HepG2 (cell line): ENCODE measurements at regions of chr2 and their contacts with region 1.

Region 1: GRCh38 chr2:172588931-172589330 is 33.0 kb downstream of the PDK1 start:
- DNase-seq: no peak
- ATAC-seq: no peak
- H3K4me3 ChIP-seq: no peak overlapping the region
- H3K27ac ChIP-seq: no peak overlapping the region
- H3K4me1 ChIP-seq: no peaks in the 10 kb centered on the region
- H3K27me3 ChIP-seq: no peaks in the 10 kb centered on the region
- CTCF ChIP-seq: no peak
- EP300 ChIP-seq: no peak
- POLR2A ChIP-seq: no peak
- RAD21 ChIP-seq: no peak

Region 2: DNA sequence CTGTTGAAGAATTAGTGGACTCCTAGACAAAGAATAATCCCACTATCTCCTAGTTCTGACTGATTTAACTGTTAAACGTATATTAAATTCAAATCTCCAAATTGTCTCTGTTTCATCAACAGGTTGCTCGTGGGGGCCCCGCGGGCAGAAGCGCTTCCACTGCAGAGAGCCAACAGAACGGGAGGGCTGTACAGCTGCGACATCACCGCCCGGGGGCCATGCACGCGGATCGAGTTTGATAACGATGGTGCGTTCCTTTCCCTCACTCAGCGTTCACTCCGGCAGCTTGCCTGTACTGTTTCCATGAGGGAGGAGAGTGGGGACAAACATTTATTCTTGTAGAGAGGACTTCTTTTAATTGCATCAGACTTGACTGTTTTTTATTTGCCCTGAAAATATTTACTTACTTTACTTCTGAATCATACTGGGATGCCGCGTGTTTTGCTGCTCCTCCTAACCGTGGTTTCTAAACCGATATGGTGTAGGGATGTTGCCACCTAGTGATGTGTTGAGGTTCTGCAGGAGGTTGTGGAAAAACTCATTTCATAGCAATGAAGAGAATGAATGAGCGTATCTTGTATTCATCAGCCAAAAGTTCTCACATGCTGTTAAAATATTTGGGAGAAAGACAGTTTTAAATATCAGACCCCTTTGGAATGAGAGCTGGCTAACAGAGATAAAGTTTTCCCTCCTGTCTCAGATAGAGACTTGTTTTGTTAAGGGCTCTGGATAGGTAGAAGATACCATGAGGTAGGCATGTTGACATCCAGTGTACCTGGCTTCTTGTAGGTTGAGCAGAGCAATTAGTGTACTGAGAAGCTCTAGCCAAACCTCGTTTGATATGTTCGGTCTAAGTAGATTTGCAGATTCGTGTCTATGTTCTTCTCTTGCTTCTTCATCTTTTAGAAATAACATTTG is 123.3 kb before region 1 on chr2:
- CTCF ChIA-PET with region 1: no interaction called
- POLR2A ChIA-PET with region 1: no interaction called
- in situ Hi-C with region 1: no loop called
- intact Hi-C with region 1: no loop called
- DNase-seq: peak; percentile 95
- ATAC-seq: peak; percentile 93
- H3K4me3 ChIP-seq: peak overlapping the region in 1 of 3 experiments; percentile 36; a peak in 2 of 6 replicates
- H3K27ac ChIP-seq: peak overlapping the region; percentile 26
- H3K4me1 ChIP-seq: peaks cover 48% of the 10 kb centered on the region
- H3K27me3 ChIP-seq: no peaks in the 10 kb centered on the region
- CTCF ChIP-seq: peak; percentile 93
- EP300 ChIP-seq: peak in 1 of 2 experiments; percentile 74; a peak in 1 of 4 replicates
- POLR2A ChIP-seq: no peak
- RAD21 ChIP-seq: peak; percentile 93

Region 3: DNA sequence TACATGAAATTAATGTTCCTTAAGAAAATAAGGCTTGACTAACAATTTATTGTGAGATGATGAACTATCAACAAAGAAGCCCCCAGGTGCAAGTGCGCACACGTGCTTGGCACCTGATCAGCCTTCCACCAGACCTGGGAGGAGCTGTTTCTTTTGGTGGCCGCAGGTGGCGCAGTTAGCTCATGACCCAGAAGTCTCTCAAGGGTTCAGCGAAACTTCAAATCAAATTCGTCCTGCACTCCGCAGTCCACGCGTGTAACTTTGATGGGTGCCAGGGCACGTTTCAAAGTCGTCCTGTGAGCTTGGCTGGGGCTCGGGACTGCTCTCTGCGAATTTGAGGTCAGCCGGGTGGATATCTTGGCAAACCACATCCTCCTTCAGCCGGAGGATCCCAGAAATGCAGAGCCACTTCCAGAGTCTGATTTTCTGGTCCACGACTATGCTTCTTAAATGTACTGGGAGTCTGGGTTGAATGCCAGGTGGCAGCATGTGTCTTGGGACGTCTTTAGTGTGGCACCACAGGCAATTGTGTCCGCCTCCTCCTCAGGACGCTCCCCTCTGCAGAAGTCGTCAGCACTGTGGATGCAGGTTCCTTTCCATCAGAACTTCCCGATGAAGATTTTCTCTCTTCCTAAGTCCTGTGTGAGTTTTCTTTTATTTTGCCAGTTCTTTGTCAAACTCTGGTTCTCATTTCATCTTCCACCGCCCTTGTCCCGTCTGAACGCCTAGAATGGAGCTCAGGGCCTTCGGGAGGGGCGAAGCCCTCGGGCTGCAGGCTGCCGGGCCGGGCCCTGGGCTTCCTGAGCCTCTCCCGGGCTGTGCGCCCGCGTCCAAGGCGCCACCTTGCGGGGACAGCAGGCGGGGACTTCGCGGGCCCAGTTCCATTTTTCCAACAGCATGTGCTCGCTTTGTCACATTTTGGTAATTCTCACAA is 85.4 kb after region 1 on chr2:
- CTCF ChIA-PET with region 1: interaction called, 9 read pairs
- POLR2A ChIA-PET with region 1: no interaction called
- in situ Hi-C with region 1: no loop called
- intact Hi-C with region 1: loop called (anchors 2 kb)
- DNase-seq: no peak
- ATAC-seq: peak; percentile 98
- H3K4me3 ChIP-seq: no peak overlapping the region; a peak in 1 of 6 replicates
- H3K27ac ChIP-seq: no peak overlapping the region
- H3K4me1 ChIP-seq: peaks cover 10% of the 10 kb centered on the region
- H3K27me3 ChIP-seq: no peaks in the 10 kb centered on the region
- CTCF ChIP-seq: peak; percentile 74
- EP300 ChIP-seq: no peak
- POLR2A ChIP-seq: no peak
- RAD21 ChIP-seq: no peak

Region 4: GRCh38 chr2:172710584-172711024 is 121.7 kb after region 1 on chr2:
- CTCF ChIA-PET with region 1: interaction called, 10 read pairs
- POLR2A ChIA-PET with region 1: no interaction called
- in situ Hi-C with region 1: no loop called
- intact Hi-C with region 1: loop called (anchors 1 kb)
- DNase-seq: peak; percentile 25
- ATAC-seq: peak; percentile 60
- H3K4me3 ChIP-seq: no peak overlapping the region
- H3K27ac ChIP-seq: no peak overlapping the region
- H3K4me1 ChIP-seq: no peaks in the 10 kb centered on the region
- H3K27me3 ChIP-seq: peaks cover 0 to 5% of the 10 kb centered on the region in 2 experiments; a peak in 2 of 5 replicates
- CTCF ChIP-seq: peak; percentile 72
- EP300 ChIP-seq: no peak
- POLR2A ChIP-seq: no peak
- RAD21 ChIP-seq: peak; percentile 25; the same call in 1 of the 2 replicates